BJ (cell line): ENCODE measurements at regions of chr11 and their contacts with region 1.

Region 1: DNA sequence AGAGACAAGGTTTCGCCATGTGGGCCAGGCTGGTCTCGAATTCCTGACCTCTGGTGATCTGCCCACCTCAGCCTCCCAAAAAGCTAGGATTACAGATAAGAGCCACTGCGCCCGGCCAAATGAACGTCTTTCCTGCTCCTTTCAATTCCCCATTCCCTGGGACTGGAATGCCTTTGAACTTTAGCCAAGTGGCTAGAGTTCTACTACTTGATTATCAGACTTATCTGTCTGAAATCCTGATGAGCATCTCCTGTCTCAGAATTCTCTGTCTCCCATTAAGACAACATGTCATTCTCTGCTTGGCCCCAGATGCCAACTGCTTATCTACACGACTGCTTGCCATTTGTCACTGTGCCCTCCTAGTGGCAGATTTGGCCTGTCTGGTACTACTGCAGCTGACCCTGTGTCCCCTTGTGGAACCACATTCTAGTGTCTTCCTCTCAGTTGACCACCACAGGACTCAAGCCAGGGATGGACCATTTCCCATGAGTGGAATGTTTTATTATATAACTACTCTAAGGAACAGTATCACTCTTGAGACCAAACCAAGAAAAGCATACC is 33.1 kb upstream of the IPO7 start:
- DNase-seq: no peak
- H3K4me3 ChIP-seq: no peak overlapping the region
- H3K27me3 ChIP-seq: no peaks in the 10 kb centered on the region
- CTCF ChIP-seq: no peak

Region 2: DNA sequence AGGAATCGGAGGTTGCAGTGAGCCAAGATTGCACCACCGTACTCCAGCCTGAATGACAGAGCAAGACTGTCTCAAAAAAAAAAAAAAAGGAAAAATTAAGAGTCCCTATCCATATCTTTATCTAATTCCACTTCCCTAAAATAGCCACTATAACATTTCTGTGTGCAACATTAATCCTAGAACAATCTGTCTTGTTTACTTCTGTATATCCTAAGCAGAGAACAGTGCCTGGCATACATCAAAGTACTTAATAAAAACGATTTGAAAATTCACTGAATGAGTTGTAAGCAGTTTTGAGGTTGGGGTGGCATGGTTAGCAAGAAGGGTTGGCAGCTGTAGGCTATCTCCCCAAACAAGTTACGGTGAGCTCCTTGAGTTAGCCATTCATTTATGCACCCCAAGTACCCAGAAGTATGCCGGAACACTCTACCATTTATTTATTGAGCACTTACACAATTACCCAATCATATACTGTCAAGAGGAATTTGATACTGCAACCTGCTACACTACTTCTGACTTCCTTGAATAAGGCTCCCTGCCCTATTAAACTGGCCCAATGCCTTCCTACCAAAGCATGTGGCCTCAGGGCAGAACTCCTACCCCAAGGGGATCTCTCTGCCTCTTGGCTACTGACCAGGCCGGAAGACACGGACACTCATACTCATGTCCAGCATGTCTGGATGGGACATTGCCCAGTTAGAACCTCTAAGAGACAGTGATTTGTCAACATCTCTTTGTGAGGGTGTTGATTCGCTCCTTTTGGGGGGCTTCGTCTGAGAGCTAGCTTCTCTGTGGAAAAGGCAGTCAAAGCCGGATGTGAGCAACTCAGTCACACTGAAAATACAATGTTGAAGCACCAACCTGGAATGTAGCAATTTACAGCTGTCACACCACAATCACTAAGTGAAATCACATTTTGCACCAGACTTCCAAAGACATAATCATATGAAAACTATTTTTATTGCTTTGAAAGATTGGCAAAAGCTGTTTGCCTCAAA is 20.7 kb before region 1 on chr11:
- CTCF ChIA-PET with region 1: interaction called, 3 read pairs
- POLR2A ChIA-PET with region 1: interaction called, 10 read pairs
- DNase-seq: peak; percentile 94
- H3K4me3 ChIP-seq: peak overlapping the region; percentile 2; the same call in 1 of the 2 replicates
- H3K27me3 ChIP-seq: no peaks in the 10 kb centered on the region
- CTCF ChIP-seq: no peak